Activated B cell treated with CpG ODN at 0.5 μM for 24 hours (primary cell): ENCODE measurements at regions of chr10 and their contacts with region 1.

Region 1: GRCh38 chr10:73625884-73626752 is 15.2 kb downstream of the MYOZ1 start:
- DNase-seq: peak; percentile 78
- ATAC-seq: peak; percentile 94
- H3K4me3 Mint-ChIP-seq: peak overlapping the region; percentile 99
- H3K27ac Mint-ChIP-seq: peak overlapping the region; percentile 98
- H3K4me1 Mint-ChIP-seq: peaks cover 24% of the 10 kb centered on the region
- H3K27me3 Mint-ChIP-seq: no peaks in the 10 kb centered on the region
- CTCF ChIP-seq: no peak

Region 2: DNA sequence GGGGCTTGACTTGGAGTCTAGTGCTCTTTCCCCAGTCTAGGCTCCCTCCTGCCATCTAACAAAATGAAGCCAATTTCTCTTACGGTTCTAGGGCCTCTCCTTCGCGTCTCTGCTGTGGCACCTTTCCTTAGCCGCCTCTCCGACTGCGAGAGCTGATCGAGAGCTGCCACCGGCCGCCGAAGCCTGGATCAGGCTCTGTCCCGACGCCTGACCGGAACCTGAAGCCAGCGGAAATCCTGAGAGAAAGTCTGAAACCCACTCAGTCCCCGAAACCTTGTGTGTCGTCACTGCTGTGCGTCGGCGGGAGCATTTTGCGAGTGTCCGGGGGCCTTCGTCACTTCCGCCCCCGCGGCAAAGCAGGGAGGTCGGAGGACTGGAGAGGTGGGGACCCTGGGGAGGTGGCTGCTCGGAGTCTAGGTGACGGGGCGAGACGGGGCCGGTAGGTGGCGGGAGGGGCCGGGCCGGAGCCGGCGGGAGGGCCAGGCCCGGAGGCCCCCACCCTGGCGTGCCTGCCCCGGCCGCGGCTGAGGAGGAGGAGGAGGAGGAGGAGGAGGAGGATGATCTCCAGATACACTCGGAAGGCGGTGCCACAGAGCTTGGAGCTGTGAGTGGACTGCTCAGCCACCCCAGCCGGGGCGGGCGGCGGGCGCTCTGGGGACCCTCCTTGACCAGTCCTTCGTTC is 458.2 kb before region 1 on chr10 and contains the starts of genes ECD and FAM149B1:
- CTCF ChIA-PET with region 1: no interaction called
- POLR2A ChIA-PET with region 1: no interaction called
- intact Hi-C with region 1: loop called (anchors 10 kb)
- DNase-seq: peak; percentile 95
- ATAC-seq: peak; percentile 98
- H3K4me3 Mint-ChIP-seq: peak within 1 kb of the TSS; percentile 100
- H3K27ac Mint-ChIP-seq: peak within 1 kb of the TSS; percentile 99
- H3K4me1 Mint-ChIP-seq: peaks cover 34% of the 10 kb centered on the region
- H3K27me3 Mint-ChIP-seq: no peaks in the 10 kb centered on the region
- CTCF ChIP-seq: no peak
- total RNA-seq, gene ECD: 31.8 and 35.0 TPM in 2 replicates
- total RNA-seq, gene FAM149B1: 11.4 and 16.0 TPM in 2 replicates

Region 3: DNA sequence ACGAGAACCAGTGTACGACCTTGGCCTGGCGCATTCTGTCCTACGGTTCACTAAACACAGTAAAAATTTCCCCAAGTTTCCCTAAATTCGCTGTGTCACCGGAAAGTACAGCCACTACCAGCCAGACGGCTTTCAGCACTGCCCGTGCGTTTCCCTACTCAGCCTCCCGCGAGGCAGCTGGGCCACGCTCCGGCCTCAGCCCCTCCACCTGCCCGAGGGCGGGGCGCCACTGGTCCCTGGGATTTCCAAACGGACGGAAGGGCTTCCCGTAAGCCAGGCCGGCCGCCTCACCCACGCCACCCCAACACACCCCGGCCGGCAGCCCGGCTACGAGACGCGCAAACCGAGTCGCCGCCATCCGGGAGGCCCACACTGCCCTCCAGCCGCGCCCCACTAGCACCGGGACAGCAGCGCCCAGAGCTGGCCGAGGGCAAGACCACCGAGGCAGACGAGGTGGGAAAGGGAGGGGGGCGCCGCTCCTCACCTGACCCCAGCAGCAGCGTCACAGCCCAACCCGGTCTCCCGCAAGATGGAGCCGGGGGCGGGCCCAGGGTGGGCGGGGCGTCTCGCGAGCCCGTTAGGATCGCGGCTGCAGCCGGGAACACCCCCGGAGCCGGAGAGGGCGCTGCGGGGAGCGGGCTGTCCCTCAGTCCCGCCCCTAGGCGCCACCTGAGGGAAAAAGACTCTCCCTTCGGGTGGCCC is 212.4 kb before region 1 on chr10 and contains the start of gene ANXA7:
- CTCF ChIA-PET with region 1: no interaction called
- POLR2A ChIA-PET with region 1: interaction called, 4 read pairs
- intact Hi-C with region 1: loop called (anchors 1 kb)
- DNase-seq: peak; percentile 86
- ATAC-seq: peak; percentile 93
- H3K4me3 Mint-ChIP-seq: peak within 1 kb of the TSS; percentile 92
- H3K27ac Mint-ChIP-seq: peak within 1 kb of the TSS; percentile 86
- H3K4me1 Mint-ChIP-seq: peaks cover 56% of the 10 kb centered on the region
- H3K27me3 Mint-ChIP-seq: no peaks in the 10 kb centered on the region
- CTCF ChIP-seq: no peak
- total RNA-seq, gene ANXA7: 150 TPM in 2 replicates

Region 4: GRCh38 chr10:73644015-73644743 is 18.1 kb after region 1 on chr10:
- CTCF ChIA-PET with region 1: interaction called, 5 read pairs
- POLR2A ChIA-PET with region 1: interaction called, 7 read pairs
- intact Hi-C with region 1: loop called (anchors 1 kb)
- DNase-seq: no peak
- ATAC-seq: peak; percentile 69
- H3K4me3 Mint-ChIP-seq: peak overlapping the region; percentile 65
- H3K27ac Mint-ChIP-seq: peak overlapping the region; percentile 26
- H3K4me1 Mint-ChIP-seq: peaks cover 13% of the 10 kb centered on the region
- H3K27me3 Mint-ChIP-seq: peaks cover 4% of the 10 kb centered on the region
- CTCF ChIP-seq: peak; percentile 62

Region 5: DNA sequence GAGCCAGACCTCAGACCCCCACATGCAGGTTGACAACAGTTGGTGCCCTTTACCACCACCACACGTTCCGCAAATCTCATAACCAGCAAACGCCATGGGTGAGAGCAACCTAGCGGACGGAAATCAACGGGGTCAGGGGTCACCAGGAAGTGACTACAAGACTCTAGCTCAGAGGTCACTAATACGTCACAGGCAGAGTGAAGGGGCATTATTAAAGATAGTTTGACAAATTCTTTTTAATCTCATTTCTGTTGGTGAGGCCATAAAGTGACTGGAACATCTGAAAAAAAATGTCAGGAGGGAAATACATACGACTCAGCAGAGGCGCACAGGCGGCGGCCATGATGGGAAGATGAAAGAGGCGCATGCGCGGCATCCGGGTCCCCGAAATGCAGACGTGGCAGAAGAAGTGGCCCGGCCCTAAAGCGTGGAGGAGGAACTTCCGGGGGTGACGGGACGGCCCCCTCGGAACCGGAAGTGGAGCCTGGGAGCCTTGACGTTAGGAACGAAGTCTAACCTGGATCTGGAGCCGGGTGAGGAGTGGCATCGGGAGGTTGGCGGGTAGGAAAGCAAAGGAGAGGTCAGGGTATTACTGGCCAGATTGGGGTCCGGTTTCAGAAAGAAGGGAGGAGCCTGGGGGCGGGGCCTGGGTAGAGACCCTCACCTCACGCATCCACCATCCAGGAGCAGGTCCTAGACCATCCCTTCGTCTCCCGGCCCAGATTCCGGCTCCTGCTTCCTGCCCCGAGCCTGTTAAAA is 118.0 kb after region 1 on chr10 and contains the start of gene SEC24C:
- CTCF ChIA-PET with region 1: interaction called, 3 read pairs
- POLR2A ChIA-PET with region 1: interaction called, 4 read pairs
- intact Hi-C with region 1: loop called (anchors 5 kb)
- DNase-seq: peak; percentile 86
- ATAC-seq: peak; percentile 95
- H3K4me3 Mint-ChIP-seq: peak within 1 kb of the TSS; percentile 100
- H3K27ac Mint-ChIP-seq: peak within 1 kb of the TSS; percentile 100
- H3K4me1 Mint-ChIP-seq: peaks cover 41% of the 10 kb centered on the region
- H3K27me3 Mint-ChIP-seq: no peaks in the 10 kb centered on the region
- CTCF ChIP-seq: no peak
- total RNA-seq, gene SEC24C: 78.5 and 89.8 TPM in 2 replicates

Region 6: GRCh38 chr10:75111367-75111906 is 1485.3 kb after region 1 on chr10 and contains the start of gene SAMD8:
- CTCF ChIA-PET with region 1: no interaction called
- POLR2A ChIA-PET with region 1: no interaction called
- intact Hi-C with region 1: loop called (anchors 1 kb)
- DNase-seq: peak; percentile 95
- ATAC-seq: peak; percentile 81
- H3K4me3 Mint-ChIP-seq: peak within 1 kb of the TSS; percentile 90
- H3K27ac Mint-ChIP-seq: peak within 1 kb of the TSS; percentile 90
- H3K4me1 Mint-ChIP-seq: peaks cover 45% of the 10 kb centered on the region
- H3K27me3 Mint-ChIP-seq: no peaks in the 10 kb centered on the region
- CTCF ChIP-seq: no peak
- total RNA-seq, gene SAMD8: 25.8 and 29.1 TPM in 2 replicates